ENCODE measurements at regions of chr12 and their contacts with region 1.

Region 1: DNA sequence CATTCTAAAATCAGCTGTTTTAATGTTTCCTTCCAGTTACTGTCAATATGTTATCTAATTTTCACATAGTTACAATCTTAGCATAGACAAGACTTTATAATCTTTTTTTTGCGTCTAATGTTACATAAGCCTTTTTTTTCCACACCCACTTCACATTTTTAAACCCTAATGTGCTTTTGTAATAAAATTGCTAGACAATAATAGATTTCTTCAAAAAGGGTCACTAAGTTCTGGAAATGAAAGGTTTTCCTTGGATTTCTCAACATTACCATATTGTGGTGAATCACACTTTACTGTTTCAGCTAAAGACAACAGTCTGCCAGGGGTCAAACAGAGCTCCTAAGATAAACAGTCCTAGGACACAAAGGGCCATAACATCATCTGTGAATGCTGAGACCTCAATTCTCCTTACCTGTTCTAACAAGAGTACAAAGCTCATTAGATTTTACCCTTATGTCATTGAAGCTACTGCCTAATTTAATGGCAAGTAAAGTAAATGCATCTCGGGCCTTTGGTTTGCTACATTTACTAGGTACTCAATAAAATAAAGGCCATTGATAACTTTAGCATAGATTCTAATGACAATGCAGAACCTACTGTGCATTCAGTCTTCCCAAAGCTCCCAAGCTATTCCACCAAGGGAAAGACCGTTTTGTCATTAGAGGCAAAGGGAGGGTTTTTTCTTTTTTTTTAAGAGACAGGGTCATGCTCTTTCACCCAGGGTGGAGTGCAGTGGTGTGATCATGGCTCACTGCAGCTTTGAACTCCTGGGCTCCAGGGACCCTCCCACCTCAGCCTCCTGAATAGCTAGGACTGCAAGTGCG is 111.2 kb upstream of the SLC38A2 start:
- DNase-seq: no peak
- ATAC-seq: peak in 3 of 8 donors; percentile 39 to 70 (median 55)
- H3K4me3 ChIP-seq: no peak overlapping the region
- H3K27ac ChIP-seq: peak overlapping the region in 2 of 10 donors; percentile 3 to 11
- H3K4me1 ChIP-seq: peaks cover 0 to 33% (median 9%) of the 10 kb centered on the region in 9 donors
- H3K27me3 ChIP-seq: no peaks in the 10 kb centered on the region
- CTCF ChIP-seq: no peak

Region 2: GRCh38 chr12:46556105-46556559 is 72.3 kb after region 1 on chr12:
- intact Hi-C with region 1: loop called in 1 of 10 experiments (anchors 10 kb)
- DNase-seq: no peak
- ATAC-seq: peak; percentile 79 to 95 (median 88)
- H3K4me3 ChIP-seq: no peak overlapping the region
- H3K27ac ChIP-seq: peak overlapping the region; percentile 25 to 77 (median 68)
- H3K4me1 ChIP-seq: peaks cover 0 to 53% (median 21%) of the 10 kb centered on the region in 9 donors
- H3K27me3 ChIP-seq: no peaks in the 10 kb centered on the region
- CTCF ChIP-seq: no peak

Measured in heart right ventricle (tissue), 16 donors.